HCT116 (cell line): ENCODE measurements at regions of chr3 and their contacts with region 1.

Region 1: DNA sequence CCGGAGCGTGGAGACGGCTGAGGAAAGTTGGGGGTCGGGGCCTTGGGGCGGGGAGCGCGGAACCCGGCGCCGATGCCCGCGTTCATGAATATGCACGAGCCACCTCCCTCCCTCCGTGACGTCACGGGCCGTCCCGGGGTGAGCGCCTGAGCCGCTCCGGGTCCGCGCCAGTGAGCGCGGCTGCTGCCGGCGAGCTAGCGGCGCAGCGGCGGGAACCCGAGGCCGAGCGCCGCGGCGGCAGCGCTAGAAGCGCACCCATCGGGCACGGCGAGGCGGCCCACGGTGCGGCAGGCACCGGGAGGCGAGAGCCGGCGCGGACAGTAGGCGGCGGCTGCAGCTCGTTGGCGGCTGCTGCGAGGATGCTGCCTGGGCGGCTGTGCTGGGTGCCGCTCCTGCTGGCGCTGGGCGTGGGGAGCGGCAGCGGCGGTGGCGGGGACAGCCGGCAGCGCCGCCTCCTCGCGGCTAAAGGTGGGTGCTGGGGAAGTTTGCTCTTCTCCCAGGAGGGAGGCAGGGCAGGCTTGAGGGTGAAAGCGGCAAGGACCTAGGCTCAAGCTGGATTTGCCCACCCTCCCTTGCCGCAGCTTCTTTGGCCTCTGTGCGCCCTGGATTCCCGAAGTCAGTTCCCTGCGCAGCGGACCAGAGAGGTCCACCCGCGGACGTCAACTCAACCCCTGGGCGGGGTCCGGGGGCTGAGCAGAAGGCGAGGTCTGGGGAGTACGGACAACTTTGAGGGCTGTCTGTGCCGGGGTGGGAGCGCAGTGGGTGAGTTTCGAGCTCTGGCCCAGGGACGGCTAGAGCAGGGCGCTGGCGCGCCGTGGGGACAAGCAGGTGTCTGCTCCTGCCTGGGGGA is at the start of gene CLSTN2:
- DNase-seq: no peak
- ATAC-seq: no peak
- H3K4me3 ChIP-seq: no peak within 1 kb of the TSS
- H3K27ac ChIP-seq: no peak within 1 kb of the TSS
- H3K4me1 ChIP-seq: no peaks in the 10 kb centered on the region
- H3K27me3 ChIP-seq: peaks cover 14% of the 10 kb centered on the region; the same call in 1 of the 2 replicates
- CTCF ChIP-seq: no peak
- POLR2A ChIP-seq: no peak
- RAD21 ChIP-seq: no peak
- total RNA-seq, gene CLSTN2: 0.02 TPM

Region 2: GRCh38 chr3:139427283-139427993 is 507.8 kb before region 1 on chr3:
- CTCF ChIA-PET with region 1: no interaction called
- POLR2A ChIA-PET with region 1: no interaction called
- RAD21 ChIA-PET with region 1: no interaction called
- intact Hi-C with region 1: loop called (anchors 10 kb)
- DNase-seq: peak; percentile 60
- ATAC-seq: peak; percentile 89
- H3K4me3 ChIP-seq: no peak overlapping the region
- H3K27ac ChIP-seq: no peak overlapping the region
- H3K4me1 ChIP-seq: no peaks in the 10 kb centered on the region
- H3K27me3 ChIP-seq: no peaks in the 10 kb centered on the region
- CTCF ChIP-seq: peak; percentile 71 to 92 (median 86)
- POLR2A ChIP-seq: no peak
- RAD21 ChIP-seq: peak; percentile 95

Region 3: GRCh38 chr3:139574026-139574947 is 361.0 kb before region 1 on chr3:
- CTCF ChIA-PET with region 1: no interaction called
- POLR2A ChIA-PET with region 1: no interaction called
- RAD21 ChIA-PET with region 1: no interaction called
- intact Hi-C with region 1: loop called (anchors 10 kb)
- DNase-seq: no peak
- ATAC-seq: no peak
- H3K4me3 ChIP-seq: no peak overlapping the region
- H3K27ac ChIP-seq: no peak overlapping the region
- H3K4me1 ChIP-seq: no peaks in the 10 kb centered on the region
- H3K27me3 ChIP-seq: no peaks in the 10 kb centered on the region
- CTCF ChIP-seq: peak in 1 of 3 experiments; percentile 21; a peak in 1 of 6 replicates
- POLR2A ChIP-seq: no peak
- RAD21 ChIP-seq: no peak

Region 4: DNA sequence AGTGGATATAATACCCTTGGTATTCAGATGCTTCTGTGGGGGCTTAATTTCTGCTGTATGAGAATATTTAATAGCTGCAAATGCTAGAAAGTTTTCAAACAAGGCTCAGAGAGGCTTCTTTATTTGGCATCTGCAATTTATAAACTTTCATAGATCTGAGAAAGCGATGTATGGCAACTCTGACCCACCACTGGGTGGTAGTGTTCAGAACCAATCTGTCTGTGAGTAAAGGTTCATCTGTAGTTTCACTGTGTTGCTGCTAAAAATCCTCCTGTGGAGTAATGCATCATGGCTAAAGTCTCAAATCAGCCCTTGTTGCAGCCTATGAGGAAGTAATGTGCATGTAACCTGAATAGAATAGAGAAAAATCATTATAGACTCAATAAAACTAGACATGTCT is 47.2 kb after region 1 on chr3:
- CTCF ChIA-PET with region 1: no interaction called
- POLR2A ChIA-PET with region 1: no interaction called
- RAD21 ChIA-PET with region 1: no interaction called
- intact Hi-C with region 1: no loop called
- DNase-seq: no peak
- ATAC-seq: no peak
- H3K4me3 ChIP-seq: no peak overlapping the region
- H3K27ac ChIP-seq: no peak overlapping the region
- H3K4me1 ChIP-seq: no peaks in the 10 kb centered on the region
- H3K27me3 ChIP-seq: peaks cover 51% of the 10 kb centered on the region
- CTCF ChIP-seq: peak; percentile 3 to 35 (median 24); a peak in 2 of 6 replicates
- POLR2A ChIP-seq: no peak
- RAD21 ChIP-seq: no peak

Region 5: GRCh38 chr3:140051019-140051957 is 116.0 kb after region 1 on chr3:
- CTCF ChIA-PET with region 1: interaction called, 3 read pairs
- POLR2A ChIA-PET with region 1: no interaction called
- RAD21 ChIA-PET with region 1: no interaction called
- intact Hi-C with region 1: loop called (anchors 5 kb)
- DNase-seq: peak; percentile 21
- ATAC-seq: peak; percentile 83; the same call in 1 of the 2 replicates
- H3K4me3 ChIP-seq: no peak overlapping the region
- H3K27ac ChIP-seq: no peak overlapping the region
- H3K4me1 ChIP-seq: no peaks in the 10 kb centered on the region
- H3K27me3 ChIP-seq: peaks cover 41% of the 10 kb centered on the region
- CTCF ChIP-seq: peak; percentile 50 to 65 (median 62); a peak in 5 of 6 replicates
- POLR2A ChIP-seq: no peak
- RAD21 ChIP-seq: peak; percentile 70

Region 6: DNA sequence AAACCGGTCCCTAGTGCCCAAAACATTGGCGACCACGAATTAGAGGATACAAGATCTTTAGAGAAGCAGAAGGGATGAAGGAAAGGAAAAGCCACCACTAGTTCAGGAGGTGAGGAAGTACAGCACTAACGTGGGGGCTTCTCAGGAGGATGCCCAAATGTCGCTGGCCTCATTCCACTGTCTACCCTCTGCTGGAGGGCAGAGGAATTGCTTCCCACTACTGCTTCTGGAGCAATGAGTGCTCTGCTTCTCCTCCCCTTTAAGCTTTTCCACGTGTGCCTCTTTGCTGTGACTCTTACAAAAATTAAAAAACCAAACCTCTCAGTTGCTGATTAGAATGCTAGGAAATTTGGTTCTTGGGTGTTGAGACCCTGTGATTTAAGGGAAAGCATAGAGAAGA is 281.0 kb after region 1 on chr3:
- CTCF ChIA-PET with region 1: interaction called, 3 read pairs
- POLR2A ChIA-PET with region 1: no interaction called
- RAD21 ChIA-PET with region 1: interaction called, 3 to 4 read pairs
- intact Hi-C with region 1: loop called (anchors 1 kb)
- DNase-seq: no peak
- ATAC-seq: peak; percentile 82
- H3K4me3 ChIP-seq: no peak overlapping the region
- H3K27ac ChIP-seq: no peak overlapping the region
- H3K4me1 ChIP-seq: no peaks in the 10 kb centered on the region
- H3K27me3 ChIP-seq: peaks cover 16% of the 10 kb centered on the region; the same call in 1 of the 2 replicates
- CTCF ChIP-seq: peak; percentile 11 to 79 (median 73); a peak in 4 of 6 replicates
- POLR2A ChIP-seq: no peak
- RAD21 ChIP-seq: 0 out of 2 replicates have a peak, but pooled peaks have one; percentile 9

Region 7: DNA sequence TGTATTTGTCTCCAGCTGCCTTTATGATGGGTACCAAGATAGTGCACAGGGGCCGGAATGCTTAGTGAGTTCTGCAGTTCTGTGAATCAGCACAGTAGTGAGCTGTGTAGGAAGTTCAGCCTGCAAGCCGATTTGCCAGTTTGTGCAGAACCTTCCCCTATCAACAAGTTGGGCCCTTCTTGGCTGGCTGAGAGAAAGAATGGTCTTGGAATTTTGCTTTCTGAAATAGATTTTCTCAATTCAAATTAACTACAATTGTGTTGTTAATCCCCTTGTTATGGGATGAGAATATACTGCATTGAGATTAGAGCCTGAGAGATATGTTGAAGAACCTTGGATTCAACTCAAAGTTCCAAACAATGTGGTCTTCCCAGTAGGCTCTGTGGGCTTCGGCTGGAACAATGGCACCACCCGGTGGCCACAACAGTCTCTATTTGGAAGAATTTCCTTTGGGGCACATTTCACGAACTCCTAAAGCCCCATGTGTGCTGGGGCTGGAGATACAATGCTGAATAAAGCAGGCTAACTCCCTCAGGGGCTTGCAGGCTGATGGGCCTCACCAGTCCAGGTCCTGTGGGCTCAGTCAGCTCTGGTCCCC is 801.7 kb after region 1 on chr3:
- CTCF ChIA-PET with region 1: no interaction called
- POLR2A ChIA-PET with region 1: no interaction called
- RAD21 ChIA-PET with region 1: no interaction called
- intact Hi-C with region 1: loop called (anchors 2 kb)
- DNase-seq: no peak
- ATAC-seq: peak; percentile 63
- H3K4me3 ChIP-seq: no peak overlapping the region
- H3K27ac ChIP-seq: no peak overlapping the region
- H3K4me1 ChIP-seq: no peaks in the 10 kb centered on the region
- H3K27me3 ChIP-seq: peaks cover 49% of the 10 kb centered on the region
- CTCF ChIP-seq: peak; percentile 24 to 52 (median 35); a peak in 4 of 6 replicates
- POLR2A ChIP-seq: no peak
- RAD21 ChIP-seq: peak; percentile 65

Region 8: DNA sequence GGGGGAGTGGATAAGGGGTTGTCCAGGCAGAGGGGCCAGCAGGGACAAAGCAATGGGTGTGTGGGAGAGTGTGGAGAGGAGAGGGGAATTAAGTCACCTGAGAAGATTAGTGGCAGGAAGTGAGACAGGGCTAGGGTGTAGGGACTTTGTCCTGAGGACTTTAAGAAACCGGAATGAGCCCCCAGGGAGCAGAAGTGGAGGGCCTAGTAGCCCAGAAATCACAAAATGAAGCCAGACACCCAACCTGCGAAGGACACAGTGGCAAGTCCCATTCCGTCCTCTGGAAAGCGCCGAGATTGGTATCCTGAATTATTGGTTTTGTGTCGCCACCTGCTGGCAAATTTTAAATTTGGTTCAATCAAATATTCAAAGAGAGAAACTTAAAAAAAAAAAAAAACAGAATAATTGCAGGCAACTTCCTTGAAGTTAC is 928.4 kb after region 1 on chr3:
- CTCF ChIA-PET with region 1: no interaction called
- POLR2A ChIA-PET with region 1: no interaction called
- RAD21 ChIA-PET with region 1: interaction called in 1 of 2 experiments, 3 read pairs
- intact Hi-C with region 1: loop called (anchors 1 kb)
- DNase-seq: peak; percentile 45
- ATAC-seq: peak; percentile 86
- H3K4me3 ChIP-seq: no peak overlapping the region
- H3K27ac ChIP-seq: no peak overlapping the region
- H3K4me1 ChIP-seq: no peaks in the 10 kb centered on the region
- H3K27me3 ChIP-seq: peaks cover 8% of the 10 kb centered on the region; the same call in 1 of the 2 replicates
- CTCF ChIP-seq: peak in 2 of 3 experiments; percentile 57 to 59; a peak in 5 of 6 replicates
- POLR2A ChIP-seq: no peak
- RAD21 ChIP-seq: peak; percentile 76